MCF 10A (cell line): ENCODE measurements at regions of chr2 and their contacts with region 1.

Region 1: GRCh38 chr2:9897331-9897737 is 54.1 kb downstream of the TAF1B start:
- DNase-seq: peak; percentile 99
- H3K4me3 Mint-ChIP-seq: peak overlapping the region; percentile 23
- H3K27ac Mint-ChIP-seq: peak overlapping the region; percentile 78
- H3K4me1 Mint-ChIP-seq: peaks cover 33% of the 10 kb centered on the region
- H3K27me3 Mint-ChIP-seq: no peaks in the 10 kb centered on the region
- CTCF ChIP-seq: no peak

Region 2: DNA sequence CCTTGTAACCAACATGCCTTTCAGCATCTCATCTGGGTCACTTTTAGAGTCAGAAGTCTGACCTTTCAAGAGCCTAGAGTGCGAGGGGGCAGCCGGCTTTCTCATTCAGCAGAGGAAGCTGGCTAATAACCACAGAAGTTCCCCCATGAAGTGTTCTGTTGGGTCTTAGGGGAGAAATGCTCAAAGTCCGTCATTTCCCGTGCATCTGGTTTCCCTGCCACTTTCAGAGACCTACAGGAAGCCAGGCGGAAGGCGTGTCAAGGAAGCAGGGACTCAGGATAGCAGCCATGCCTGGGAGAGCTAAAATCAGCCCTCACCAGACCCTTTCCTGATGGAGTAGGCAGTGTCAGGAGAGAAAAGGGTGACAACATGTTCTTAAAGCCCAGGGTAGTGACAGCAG is 1517.3 kb before region 1 on chr2:
- CTCF ChIA-PET with region 1: no interaction called
- POLR2A ChIA-PET with region 1: no interaction called
- intact Hi-C with region 1: no loop called
- DNase-seq: no peak
- H3K4me3 Mint-ChIP-seq: no peak overlapping the region
- H3K27ac Mint-ChIP-seq: no peak overlapping the region
- H3K4me1 Mint-ChIP-seq: no peaks in the 10 kb centered on the region
- H3K27me3 Mint-ChIP-seq: no peaks in the 10 kb centered on the region
- CTCF ChIP-seq: no peak

Region 3: GRCh38 chr2:9525266-9525665 is 372.1 kb before region 1 on chr2:
- CTCF ChIA-PET with region 1: no interaction called
- POLR2A ChIA-PET with region 1: no interaction called
- intact Hi-C with region 1: no loop called
- DNase-seq: no peak
- H3K4me3 Mint-ChIP-seq: no peak overlapping the region
- H3K27ac Mint-ChIP-seq: no peak overlapping the region
- H3K4me1 Mint-ChIP-seq: no peaks in the 10 kb centered on the region
- H3K27me3 Mint-ChIP-seq: no peaks in the 10 kb centered on the region
- CTCF ChIP-seq: no peak

Region 4: GRCh38 chr2:9639000-9639602 is 258.2 kb before region 1 on chr2:
- CTCF ChIA-PET with region 1: no interaction called
- POLR2A ChIA-PET with region 1: no interaction called
- intact Hi-C with region 1: no loop called
- DNase-seq: no peak
- H3K4me3 Mint-ChIP-seq: peak overlapping the region; percentile 31
- H3K27ac Mint-ChIP-seq: peak overlapping the region; percentile 63
- H3K4me1 Mint-ChIP-seq: peaks cover 50% of the 10 kb centered on the region
- H3K27me3 Mint-ChIP-seq: no peaks in the 10 kb centered on the region
- CTCF ChIP-seq: no peak

Region 5: DNA sequence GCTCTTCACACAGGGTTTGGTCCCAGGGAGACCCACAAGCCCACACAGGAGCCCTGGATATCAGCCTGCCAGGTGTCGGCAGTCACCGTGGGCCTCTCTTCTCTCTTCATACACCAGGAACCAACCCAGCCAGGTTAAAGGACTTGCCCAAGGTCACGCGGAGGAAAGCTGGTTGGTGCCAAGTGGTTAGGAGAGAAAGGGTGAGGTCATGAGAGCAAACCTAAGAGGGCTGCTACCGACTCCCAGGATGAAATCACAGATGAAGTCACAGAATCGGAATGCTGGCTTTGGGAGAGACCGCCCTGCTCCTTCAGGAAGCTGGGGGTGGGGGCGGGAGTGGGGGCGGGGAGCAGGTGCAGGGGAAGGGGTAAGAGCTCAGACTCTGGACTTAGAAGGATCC is 77.3 kb before region 1 on chr2:
- CTCF ChIA-PET with region 1: interaction called, 20 read pairs
- POLR2A ChIA-PET with region 1: interaction called, 11 read pairs
- intact Hi-C with region 1: no loop called
- DNase-seq: peak; percentile 90
- H3K4me3 Mint-ChIP-seq: peak overlapping the region; percentile 22
- H3K27ac Mint-ChIP-seq: peak overlapping the region; percentile 90
- H3K4me1 Mint-ChIP-seq: peaks cover 17% of the 10 kb centered on the region
- H3K27me3 Mint-ChIP-seq: no peaks in the 10 kb centered on the region
- CTCF ChIP-seq: no peak

Region 6: DNA sequence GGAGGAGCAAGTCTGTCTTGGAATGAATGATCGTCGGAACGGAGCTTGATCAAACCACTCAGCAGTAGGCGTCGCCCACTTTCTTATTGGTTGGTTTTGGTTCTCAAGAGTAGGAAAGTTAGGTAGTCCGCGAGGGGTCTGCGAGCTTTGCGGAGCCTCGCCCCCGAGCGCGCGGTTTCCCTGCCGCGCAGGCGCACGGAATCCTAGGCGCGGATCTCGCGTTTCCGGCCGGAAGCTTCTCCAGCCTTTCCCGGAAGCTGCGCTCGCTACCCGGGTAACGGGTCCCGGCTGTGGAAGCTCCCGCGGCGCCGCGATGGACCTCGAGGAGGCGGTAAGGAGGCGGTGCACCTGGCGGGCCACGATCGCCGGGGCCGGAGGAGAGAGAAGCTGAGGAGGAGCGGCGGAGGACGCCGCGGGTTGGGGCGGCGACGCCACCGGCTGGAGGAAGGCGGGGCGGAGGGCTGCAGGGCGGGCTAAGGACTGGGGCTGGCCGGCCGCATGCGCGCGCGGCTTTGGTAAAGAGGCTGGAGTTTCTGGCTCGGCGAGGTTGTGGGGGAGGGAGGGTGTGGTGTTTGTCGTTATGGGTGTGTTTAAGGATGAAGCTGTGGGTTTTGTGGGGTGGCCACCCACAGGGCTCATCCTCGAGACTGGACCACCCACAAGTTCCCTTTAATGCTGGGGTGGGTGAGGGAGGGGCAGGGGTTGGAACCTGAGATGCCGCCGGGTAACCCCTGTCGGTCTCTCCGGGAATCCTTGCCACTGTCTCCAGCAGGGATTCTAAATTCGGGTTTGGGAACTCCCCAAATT is 53.9 kb before region 1 on chr2 and contains the start of gene TAF1B:
- CTCF ChIA-PET with region 1: interaction called, 7 read pairs
- POLR2A ChIA-PET with region 1: interaction called, 72 read pairs
- intact Hi-C with region 1: loop called (anchors 1 kb)
- DNase-seq: peak; percentile 94
- H3K4me3 Mint-ChIP-seq: peak within 1 kb of the TSS; percentile 82
- H3K27ac Mint-ChIP-seq: peak within 1 kb of the TSS; percentile 92
- H3K4me1 Mint-ChIP-seq: peaks cover 40% of the 10 kb centered on the region
- H3K27me3 Mint-ChIP-seq: no peaks in the 10 kb centered on the region
- CTCF ChIP-seq: no peak
- total RNA-seq, gene TAF1B: 19.7 and 25.5 TPM in 2 replicates

Region 7: DNA sequence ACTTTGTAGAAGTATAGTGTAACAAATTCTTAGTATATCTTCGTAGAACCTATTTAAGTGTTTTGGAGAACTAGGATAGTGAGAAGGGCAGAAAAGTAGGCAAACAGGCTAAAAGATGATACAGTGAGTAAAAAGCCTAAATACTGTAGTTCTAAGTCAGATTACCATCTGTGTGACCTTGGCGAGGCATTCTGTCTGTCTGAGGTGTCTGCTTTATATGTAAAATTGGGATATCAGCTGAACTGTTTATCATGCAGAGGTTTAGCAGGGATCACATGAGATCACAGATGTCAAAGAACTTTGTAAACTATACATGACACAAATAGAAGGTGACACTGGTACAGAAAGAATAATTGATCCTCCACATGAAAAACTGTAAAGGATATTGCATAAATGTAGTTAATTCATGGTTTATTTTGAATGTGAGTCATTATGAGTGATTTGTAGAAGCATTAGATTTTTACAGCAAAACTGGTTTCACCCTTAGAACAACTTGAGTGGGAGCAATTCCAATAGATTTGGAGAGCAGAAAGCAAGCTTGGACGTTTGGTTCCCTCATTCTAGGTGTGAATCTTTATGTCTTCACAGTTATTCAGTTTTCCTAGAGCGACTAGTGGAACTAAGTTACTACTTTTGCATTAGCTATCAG is 12.2 kb before region 1 on chr2:
- CTCF ChIA-PET with region 1: interaction called, 8 read pairs
- POLR2A ChIA-PET with region 1: interaction called, 11 read pairs
- intact Hi-C with region 1: no loop called
- DNase-seq: peak; percentile 26
- H3K4me3 Mint-ChIP-seq: no peak overlapping the region
- H3K27ac Mint-ChIP-seq: peak overlapping the region; percentile 47
- H3K4me1 Mint-ChIP-seq: peaks cover 11% of the 10 kb centered on the region
- H3K27me3 Mint-ChIP-seq: no peaks in the 10 kb centered on the region
- CTCF ChIP-seq: no peak

Region 8: GRCh38 chr2:9909106-9909505 is 11.8 kb after region 1 on chr2:
- CTCF ChIA-PET with region 1: interaction called, 7 read pairs
- POLR2A ChIA-PET with region 1: interaction called, 50 read pairs
- intact Hi-C with region 1: no loop called
- DNase-seq: no peak
- H3K4me3 Mint-ChIP-seq: no peak overlapping the region
- H3K27ac Mint-ChIP-seq: no peak overlapping the region
- H3K4me1 Mint-ChIP-seq: peaks cover 9% of the 10 kb centered on the region
- H3K27me3 Mint-ChIP-seq: no peaks in the 10 kb centered on the region
- CTCF ChIP-seq: no peak

Region 9: DNA sequence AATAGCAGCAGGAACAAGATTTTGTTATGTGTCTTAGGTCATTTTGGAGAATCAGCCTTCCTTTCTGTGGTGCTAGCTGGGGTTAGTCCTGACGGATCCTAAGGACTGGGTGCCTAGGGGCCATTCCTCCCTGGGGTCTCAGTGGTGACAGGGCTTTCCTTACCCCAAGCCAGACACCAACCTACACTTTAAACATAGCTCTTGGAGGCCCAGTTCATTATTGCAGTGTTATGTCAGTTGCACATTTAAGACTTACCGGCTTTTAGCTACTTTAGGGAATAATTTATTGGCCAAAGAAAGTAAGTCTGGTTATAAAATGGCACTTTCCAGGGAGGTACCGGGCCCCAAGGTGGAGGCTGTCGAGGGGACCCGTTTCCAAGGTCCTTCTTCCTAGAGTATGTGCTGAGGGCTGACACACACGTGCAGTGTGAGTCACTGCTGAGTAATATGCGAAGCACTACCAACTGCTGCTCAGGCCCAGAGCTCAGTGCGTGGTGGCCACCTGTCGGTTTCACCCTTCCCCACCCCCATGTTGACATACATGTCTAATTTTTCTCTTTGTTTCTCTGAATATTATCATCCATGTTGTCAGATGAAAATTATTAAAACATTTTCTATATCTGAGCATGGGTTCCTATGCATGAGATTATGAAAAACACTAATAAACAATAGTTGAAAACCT is 17.2 kb after region 1 on chr2:
- CTCF ChIA-PET with region 1: interaction called, 7 read pairs
- POLR2A ChIA-PET with region 1: interaction called, 50 read pairs
- intact Hi-C with region 1: no loop called
- DNase-seq: peak; percentile 92
- H3K4me3 Mint-ChIP-seq: no peak overlapping the region
- H3K27ac Mint-ChIP-seq: peak overlapping the region; percentile 64
- H3K4me1 Mint-ChIP-seq: peaks cover 10% of the 10 kb centered on the region
- H3K27me3 Mint-ChIP-seq: no peaks in the 10 kb centered on the region
- CTCF ChIP-seq: peak; percentile 65

Region 10: GRCh38 chr2:10620481-10620880 is 723.1 kb after region 1 on chr2:
- CTCF ChIA-PET with region 1: no interaction called
- POLR2A ChIA-PET with region 1: no interaction called
- intact Hi-C with region 1: no loop called
- DNase-seq: peak; percentile 1
- H3K4me3 Mint-ChIP-seq: no peak overlapping the region
- H3K27ac Mint-ChIP-seq: no peak overlapping the region
- H3K4me1 Mint-ChIP-seq: peaks cover 2% of the 10 kb centered on the region
- H3K27me3 Mint-ChIP-seq: no peaks in the 10 kb centered on the region
- CTCF ChIP-seq: no peak